Activated B cell treated with CpG ODN at 0.5 μM for 24 hours (primary cell): ENCODE measurements at regions of chr1 and their contacts with region 1.

Region 1: DNA sequence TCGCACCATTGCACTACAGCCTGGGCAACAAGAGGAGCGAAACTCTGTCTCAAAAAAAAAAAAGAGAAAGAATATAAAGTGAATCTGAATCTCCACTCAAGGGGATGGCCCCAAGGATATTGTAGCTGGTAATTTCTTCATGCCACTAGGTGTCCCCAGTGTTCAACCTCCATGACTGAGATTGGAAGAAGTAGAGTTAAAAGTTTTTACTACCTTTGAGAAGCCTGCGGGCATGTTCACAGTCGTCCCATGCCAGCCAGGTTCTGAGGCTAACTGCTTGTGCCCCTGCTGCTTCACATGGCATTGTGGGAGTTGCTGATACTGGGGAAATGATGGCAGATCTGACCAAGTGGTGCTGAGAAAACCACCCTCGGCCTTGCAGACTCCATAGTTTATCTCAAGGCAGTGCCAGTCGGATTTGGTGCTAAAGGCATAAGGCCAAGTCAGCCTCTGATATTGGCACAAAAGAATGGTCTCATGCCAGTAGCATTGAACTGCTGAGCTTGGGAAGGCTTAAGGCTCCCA is 10.8 kb upstream of the SHISA4 start:
- DNase-seq: no peak
- ATAC-seq: no peak
- H3K4me3 Mint-ChIP-seq: no peak overlapping the region
- H3K27ac Mint-ChIP-seq: no peak overlapping the region
- H3K4me1 Mint-ChIP-seq: peaks cover 11% of the 10 kb centered on the region
- H3K27me3 Mint-ChIP-seq: no peaks in the 10 kb centered on the region
- CTCF ChIP-seq: no peak

Region 2: GRCh38 chr1:201828820-201829774 is 48.8 kb before region 1 on chr1 and contains the start of gene IPO9:
- CTCF ChIA-PET with region 1: no interaction called
- POLR2A ChIA-PET with region 1: interaction called, 5 read pairs
- intact Hi-C with region 1: loop called (anchors 5 kb)
- DNase-seq: peak; percentile 95
- ATAC-seq: peak; percentile 94
- H3K4me3 Mint-ChIP-seq: peak within 1 kb of the TSS; percentile 93
- H3K27ac Mint-ChIP-seq: peak within 1 kb of the TSS; percentile 96
- H3K4me1 Mint-ChIP-seq: peaks cover 42% of the 10 kb centered on the region
- H3K27me3 Mint-ChIP-seq: no peaks in the 10 kb centered on the region
- CTCF ChIP-seq: peak; percentile 35
- total RNA-seq, gene IPO9: 45.7 and 48.2 TPM in 2 replicates

Region 3: DNA sequence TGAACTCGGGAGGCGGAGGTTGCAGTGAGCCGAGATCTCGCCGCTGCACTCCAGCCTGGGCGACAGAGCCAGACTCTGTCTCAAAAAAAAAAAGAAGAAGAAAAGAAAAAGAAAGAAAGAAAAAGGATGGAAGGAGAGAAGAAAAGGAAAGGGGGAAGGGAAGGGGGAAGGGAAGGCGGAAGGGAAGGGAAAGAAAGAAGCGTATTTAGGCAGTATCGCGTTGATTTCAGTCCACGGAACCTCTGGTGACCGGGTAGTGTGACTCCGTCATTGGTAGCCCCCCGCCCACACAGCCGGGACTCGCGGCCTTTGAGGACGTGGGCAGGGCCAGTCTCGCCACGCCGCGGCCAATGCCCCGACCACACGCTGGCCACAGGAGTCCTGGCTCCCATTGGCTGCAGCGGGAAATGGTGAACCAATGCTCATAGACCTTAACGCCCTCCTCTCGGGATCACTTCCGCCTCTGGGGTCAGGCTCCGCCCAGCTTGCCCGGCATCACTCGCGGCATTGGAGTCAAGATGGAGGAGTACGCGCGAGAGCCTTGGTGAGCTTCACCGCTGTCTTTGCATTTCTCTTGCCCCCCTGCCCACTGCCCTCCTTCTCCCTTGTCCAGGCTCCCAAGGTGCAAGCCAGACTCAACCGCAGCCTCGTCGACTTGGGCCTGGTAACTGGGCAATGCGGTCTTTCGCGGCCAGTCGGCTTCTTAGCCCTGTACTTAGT is 77.2 kb after region 1 on chr1 and contains the start of gene TIMM17A:
- CTCF ChIA-PET with region 1: no interaction called
- POLR2A ChIA-PET with region 1: no interaction called
- intact Hi-C with region 1: loop called (anchors 5 kb)
- DNase-seq: peak; percentile 90
- ATAC-seq: peak; percentile 98
- H3K4me3 Mint-ChIP-seq: peak within 1 kb of the TSS; percentile 98
- H3K27ac Mint-ChIP-seq: peak within 1 kb of the TSS; percentile 97
- H3K4me1 Mint-ChIP-seq: peaks cover 26% of the 10 kb centered on the region
- H3K27me3 Mint-ChIP-seq: no peaks in the 10 kb centered on the region
- CTCF ChIP-seq: no peak
- total RNA-seq, gene TIMM17A: 50.4 and 51.3 TPM in 2 replicates

Region 4: GRCh38 chr1:202135221-202135721 is 257.3 kb after region 1 on chr1:
- CTCF ChIA-PET with region 1: interaction called, 3 read pairs
- POLR2A ChIA-PET with region 1: no interaction called
- intact Hi-C with region 1: loop called (anchors 1 kb)
- DNase-seq: peak; percentile 40
- ATAC-seq: peak; percentile 97
- H3K4me3 Mint-ChIP-seq: no peak overlapping the region
- H3K27ac Mint-ChIP-seq: no peak overlapping the region
- H3K4me1 Mint-ChIP-seq: peaks cover 4% of the 10 kb centered on the region
- H3K27me3 Mint-ChIP-seq: no peaks in the 10 kb centered on the region
- CTCF ChIP-seq: peak; percentile 49

Region 5: GRCh38 chr1:203649999-203650855 is 1772.3 kb after region 1 on chr1:
- CTCF ChIA-PET with region 1: no interaction called
- POLR2A ChIA-PET with region 1: interaction called, 12 read pairs
- intact Hi-C with region 1: no loop called
- DNase-seq: peak; percentile 66
- ATAC-seq: peak; percentile 81
- H3K4me3 Mint-ChIP-seq: peak overlapping the region; percentile 81
- H3K27ac Mint-ChIP-seq: peak overlapping the region; percentile 84
- H3K4me1 Mint-ChIP-seq: peaks cover 42% of the 10 kb centered on the region
- H3K27me3 Mint-ChIP-seq: no peaks in the 10 kb centered on the region
- CTCF ChIP-seq: no peak